HepG2 (cell line): ENCODE measurements at regions of chr15 and their contacts with region 1.

Region 1: DNA sequence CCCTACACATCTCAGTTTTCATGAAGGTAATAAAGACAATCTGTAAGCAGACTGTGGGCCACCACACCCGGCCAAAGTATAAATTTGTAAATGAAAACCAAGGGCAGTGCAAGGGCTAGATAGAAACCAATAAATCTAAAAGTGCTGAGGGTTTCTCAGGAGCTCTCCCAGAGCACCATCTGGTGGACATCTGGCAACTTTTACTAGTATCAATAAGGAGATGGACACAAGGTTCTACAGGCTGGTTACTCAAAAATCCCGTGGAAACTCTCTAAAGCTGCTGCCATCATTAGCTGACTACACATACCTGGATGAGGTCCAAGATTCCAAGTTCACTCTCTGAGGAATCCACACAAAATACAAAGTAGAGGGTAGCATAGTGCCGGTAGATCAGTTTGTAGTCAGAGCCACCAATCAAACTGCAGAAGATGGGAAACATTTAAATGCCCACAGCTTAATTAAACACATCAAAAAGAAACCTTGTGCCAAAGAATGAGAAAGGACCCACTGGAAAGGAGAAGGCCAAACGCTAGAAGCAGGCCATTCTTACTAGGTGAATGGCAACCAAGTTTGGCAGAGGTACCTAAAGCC is 5.5 kb downstream of the AP3S2 start:
- DNase-seq: peak; percentile 56
- ATAC-seq: peak; percentile 71
- H3K4me3 ChIP-seq: no peak overlapping the region
- H3K27ac ChIP-seq: no peak overlapping the region
- H3K4me1 ChIP-seq: peaks cover 14% of the 10 kb centered on the region; the same call in 1 of the 2 replicates
- H3K27me3 ChIP-seq: no peaks in the 10 kb centered on the region
- CTCF ChIP-seq: peak; percentile 60
- EP300 ChIP-seq: no peak
- POLR2A ChIP-seq: no peak
- RAD21 ChIP-seq: peak; percentile 43; the same call in 1 of the 2 replicates

Region 2: GRCh38 chr15:89760303-89761008 is 127.9 kb before region 1 on chr15:
- CTCF ChIA-PET with region 1: interaction called, 6 read pairs
- POLR2A ChIA-PET with region 1: interaction called, 3 read pairs
- in situ Hi-C with region 1: no loop called
- intact Hi-C with region 1: loop called (anchors 1 kb)
- DNase-seq: peak; percentile 61
- ATAC-seq: peak; percentile 91
- H3K4me3 ChIP-seq: peak overlapping the region in 1 of 3 experiments; percentile 53; a peak in 1 of 6 replicates
- H3K27ac ChIP-seq: no peak overlapping the region
- H3K4me1 ChIP-seq: peaks cover 54% of the 10 kb centered on the region
- H3K27me3 ChIP-seq: peaks cover 7 to 18% of the 10 kb centered on the region in 2 experiments
- CTCF ChIP-seq: peak; percentile 98
- EP300 ChIP-seq: no peak
- POLR2A ChIP-seq: no peak
- RAD21 ChIP-seq: peak; percentile 96

Region 3: DNA sequence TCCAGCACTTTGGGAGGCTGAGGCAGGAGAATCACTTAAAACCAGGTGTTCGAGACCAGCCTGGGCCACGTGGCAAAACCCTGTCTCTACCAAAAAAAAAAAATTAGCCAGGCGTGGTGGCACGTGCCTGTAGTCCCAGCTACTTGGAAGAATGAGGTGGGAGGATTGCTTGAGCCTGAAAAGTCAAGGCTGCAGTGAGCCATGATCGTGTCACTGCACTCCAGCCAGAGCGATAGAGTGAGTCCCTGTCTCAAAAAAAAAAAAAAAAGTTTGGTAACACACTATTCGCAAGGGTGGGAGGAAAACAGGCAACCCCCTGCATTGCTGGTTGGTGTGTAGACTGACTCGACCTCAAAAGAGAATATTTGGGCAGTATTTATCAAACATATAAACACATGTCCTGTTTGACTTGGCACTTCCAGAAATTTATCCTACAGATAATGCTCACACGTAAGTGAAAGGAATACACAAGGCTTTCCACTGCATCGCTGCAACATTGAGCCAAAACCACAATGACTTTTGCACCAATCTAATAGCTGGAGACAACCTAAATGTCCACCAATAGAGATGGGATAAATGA is 70.5 kb before region 1 on chr15:
- CTCF ChIA-PET with region 1: no interaction called
- POLR2A ChIA-PET with region 1: no interaction called
- in situ Hi-C with region 1: no loop called
- intact Hi-C with region 1: no loop called
- DNase-seq: no peak
- ATAC-seq: no peak
- H3K4me3 ChIP-seq: no peak overlapping the region
- H3K27ac ChIP-seq: no peak overlapping the region
- H3K4me1 ChIP-seq: peaks cover 59% of the 10 kb centered on the region
- H3K27me3 ChIP-seq: peaks cover 0 to 6% of the 10 kb centered on the region in 2 experiments; a peak in 1 of 5 replicates
- CTCF ChIP-seq: no peak
- EP300 ChIP-seq: no peak
- POLR2A ChIP-seq: no peak
- RAD21 ChIP-seq: no peak